HepG2 (cell line): ENCODE measurements at regions of chr15 and their contacts with region 1.

Region 1: DNA sequence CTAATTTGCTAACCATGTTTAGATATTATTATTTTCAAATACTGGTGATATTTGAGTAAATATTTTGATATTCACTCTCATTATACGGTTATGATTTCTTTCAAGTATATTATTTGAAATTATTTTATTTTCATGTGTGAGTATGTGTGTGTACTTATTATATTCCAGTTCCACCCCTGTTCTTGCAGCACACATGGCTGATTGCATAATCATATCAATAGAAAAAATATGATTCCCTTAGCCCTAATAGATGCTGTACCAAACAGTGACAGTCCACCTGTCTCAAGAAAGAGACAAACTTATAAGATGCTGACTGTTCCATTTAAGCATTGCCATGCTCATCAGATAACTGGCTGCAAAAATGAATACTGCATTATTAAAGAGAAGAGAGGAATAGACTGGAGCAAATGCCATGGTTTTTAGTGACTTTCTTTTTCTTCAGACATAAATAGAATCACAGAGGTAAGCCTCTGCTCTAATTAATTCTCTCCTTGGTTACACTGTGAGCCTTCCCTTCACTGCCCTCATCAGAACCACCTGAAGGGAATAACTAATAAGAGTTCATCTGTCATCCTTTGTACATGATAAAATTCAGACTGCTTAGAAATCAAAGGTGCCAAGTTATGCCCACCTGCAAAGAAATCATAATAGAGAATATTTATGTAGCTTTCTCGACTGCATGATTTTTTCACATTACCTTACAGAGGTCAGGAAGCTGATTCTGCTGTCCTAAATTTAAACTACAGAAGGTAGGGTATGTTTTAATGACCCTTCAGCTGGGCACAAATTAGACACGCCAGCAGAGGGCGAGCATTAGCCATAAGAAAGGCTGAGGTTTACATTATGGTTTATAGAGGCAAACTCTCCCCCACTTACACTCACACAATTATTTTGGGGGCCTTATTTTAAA is 15.7 kb upstream of the UNC13C start:
- DNase-seq: peak; percentile 23
- ATAC-seq: peak; percentile 70
- H3K4me3 ChIP-seq: no peak overlapping the region
- H3K27ac ChIP-seq: no peak overlapping the region
- H3K4me1 ChIP-seq: peaks cover 12% of the 10 kb centered on the region; the same call in 1 of the 2 replicates
- H3K27me3 ChIP-seq: no peaks in the 10 kb centered on the region
- CTCF ChIP-seq: peak; percentile 59
- EP300 ChIP-seq: no peak
- POLR2A ChIP-seq: no peak
- RAD21 ChIP-seq: no peak

Region 2: DNA sequence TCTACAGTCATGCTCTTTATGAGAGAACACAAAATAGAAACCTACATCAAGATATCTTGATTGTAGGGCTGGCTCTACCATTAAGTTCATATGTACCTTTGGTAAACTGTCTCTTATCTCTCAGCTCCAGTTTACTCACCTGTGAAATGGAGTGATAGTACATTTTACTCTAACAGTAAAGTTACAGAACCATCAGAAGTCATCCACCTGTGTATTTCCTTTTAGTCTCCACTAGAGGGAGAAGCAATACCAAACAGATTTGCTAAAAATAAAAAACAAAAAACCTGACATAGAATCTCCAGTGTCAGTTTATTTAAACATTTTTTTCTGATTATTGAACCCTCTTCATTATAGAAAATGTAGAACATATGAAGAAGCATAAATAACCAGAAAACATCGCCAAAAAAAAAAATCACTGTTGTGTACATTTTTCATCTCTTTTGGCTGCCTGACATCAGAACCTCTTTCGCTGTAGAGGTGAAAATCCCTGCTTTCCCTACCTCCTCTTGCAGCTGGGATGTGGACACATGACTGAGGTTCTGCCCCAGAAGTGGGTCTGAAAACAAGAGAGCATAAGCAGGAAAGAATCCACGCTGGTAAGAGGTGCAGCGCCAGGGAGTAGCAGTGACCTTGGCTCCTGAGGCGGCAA is 154.4 kb before region 1 on chr15:
- CTCF ChIA-PET with region 1: no interaction called
- POLR2A ChIA-PET with region 1: no interaction called
- in situ Hi-C with region 1: no loop called
- intact Hi-C with region 1: loop called (anchors 1 kb)
- DNase-seq: peak; percentile 12
- ATAC-seq: peak; percentile 50; the same call in 1 of the 3 replicates
- H3K4me3 ChIP-seq: no peak overlapping the region
- H3K27ac ChIP-seq: no peak overlapping the region
- H3K4me1 ChIP-seq: peaks cover 34% of the 10 kb centered on the region
- H3K27me3 ChIP-seq: no peaks in the 10 kb centered on the region
- CTCF ChIP-seq: peak; percentile 61
- EP300 ChIP-seq: no peak
- POLR2A ChIP-seq: no peak
- RAD21 ChIP-seq: 0 out of 2 replicates have a peak, but pooled peaks have one; percentile 30

Region 3: GRCh38 chr15:55108858-55109518 is 1146.4 kb after region 1 on chr15:
- CTCF ChIA-PET with region 1: no interaction called
- POLR2A ChIA-PET with region 1: no interaction called
- in situ Hi-C with region 1: no loop called
- intact Hi-C with region 1: loop called (anchors 10 kb)
- DNase-seq: peak; percentile 40
- ATAC-seq: peak; percentile 74
- H3K4me3 ChIP-seq: no peak overlapping the region
- H3K27ac ChIP-seq: no peak overlapping the region
- H3K4me1 ChIP-seq: peaks cover 14% of the 10 kb centered on the region
- H3K27me3 ChIP-seq: no peaks in the 10 kb centered on the region
- CTCF ChIP-seq: peak; percentile 68
- EP300 ChIP-seq: no peak
- POLR2A ChIP-seq: no peak
- RAD21 ChIP-seq: 0 out of 2 replicates have a peak, but pooled peaks have one; percentile 14